SK-N-SH (cell line): ENCODE measurements at regions of chr1 and their contacts with region 1.

Region 1: GRCh38 chr1:15430787-15431570 is 7.3 kb upstream of the CTRC start:
- DNase-seq: peak; percentile 93
- H3K4me3 ChIP-seq: no peak overlapping the region; a peak in 1 of 4 replicates
- H3K27ac ChIP-seq: no peak overlapping the region
- H3K4me1 ChIP-seq: no peaks in the 10 kb centered on the region; a peak in 1 of 4 replicates
- H3K27me3 ChIP-seq: no peaks in the 10 kb centered on the region
- CTCF ChIP-seq: peak; percentile 98
- EP300 ChIP-seq: no peak
- RAD21 ChIP-seq: peak; percentile 93

Region 2: DNA sequence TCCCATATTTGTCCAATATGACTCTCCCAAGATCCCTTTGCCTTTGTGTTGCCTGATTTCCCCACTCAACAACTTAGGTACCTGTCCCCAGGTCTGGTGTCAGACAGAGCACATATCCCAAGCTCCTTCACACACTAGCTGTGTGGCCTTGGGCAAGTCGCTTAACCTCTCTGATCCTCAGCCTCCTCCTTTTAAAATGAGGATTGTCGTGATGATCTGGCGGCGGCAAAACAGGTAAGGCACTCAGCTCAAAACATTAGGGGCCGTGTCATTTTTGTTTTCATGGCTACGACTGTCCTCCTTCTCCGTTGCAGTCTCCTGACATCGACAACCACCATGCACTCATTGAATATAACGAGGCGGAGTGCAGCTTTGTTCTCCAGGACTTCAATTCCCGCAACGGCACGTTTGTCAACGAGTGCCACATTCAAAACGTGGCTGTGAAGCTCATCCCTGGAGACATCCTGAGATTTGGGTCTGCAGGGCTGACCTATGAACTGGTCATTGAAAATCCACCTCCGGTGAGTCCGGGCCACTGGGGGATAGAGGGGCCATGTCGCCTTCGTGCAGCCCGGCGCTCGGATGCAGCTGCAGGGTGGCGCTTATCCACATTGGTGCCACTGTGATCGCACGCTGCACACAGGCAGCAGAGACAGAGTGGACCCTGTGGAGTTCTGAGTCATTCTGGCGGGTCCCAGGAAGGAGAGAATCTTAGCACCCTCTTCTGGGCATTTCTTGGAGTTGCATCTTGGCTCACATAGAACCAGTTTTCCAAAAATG is 158.8 kb before region 1 on chr1:
- CTCF ChIA-PET with region 1: interaction called, 12 read pairs
- POLR2A ChIA-PET with region 1: no interaction called
- DNase-seq: peak; percentile 85
- H3K4me3 ChIP-seq: no peak overlapping the region
- H3K27ac ChIP-seq: no peak overlapping the region
- H3K4me1 ChIP-seq: peaks cover 0 to 5% of the 10 kb centered on the region in 2 experiments; a peak in 1 of 4 replicates
- H3K27me3 ChIP-seq: no peaks in the 10 kb centered on the region
- CTCF ChIP-seq: peak; percentile 82
- EP300 ChIP-seq: no peak
- RAD21 ChIP-seq: peak; percentile 96

Region 3: GRCh38 chr1:15311880-15312279 is 119.1 kb before region 1 on chr1:
- CTCF ChIA-PET with region 1: interaction called, 311 read pairs
- POLR2A ChIA-PET with region 1: no interaction called
- DNase-seq: no peak
- H3K4me3 ChIP-seq: no peak overlapping the region
- H3K27ac ChIP-seq: no peak overlapping the region
- H3K4me1 ChIP-seq: no peaks in the 10 kb centered on the region
- H3K27me3 ChIP-seq: no peaks in the 10 kb centered on the region
- CTCF ChIP-seq: no peak
- EP300 ChIP-seq: no peak
- RAD21 ChIP-seq: no peak

Region 4: GRCh38 chr1:15330028-15330427 is 101.0 kb before region 1 on chr1:
- CTCF ChIA-PET with region 1: interaction called, 311 read pairs
- POLR2A ChIA-PET with region 1: no interaction called
- DNase-seq: no peak
- H3K4me3 ChIP-seq: no peak overlapping the region
- H3K27ac ChIP-seq: no peak overlapping the region
- H3K4me1 ChIP-seq: peaks cover 4 to 37% of the 10 kb centered on the region in 2 experiments; a peak in 1 of 4 replicates
- H3K27me3 ChIP-seq: no peaks in the 10 kb centered on the region
- CTCF ChIP-seq: no peak
- EP300 ChIP-seq: no peak
- RAD21 ChIP-seq: no peak

Region 5: GRCh38 chr1:15418806-15419515 is 12.0 kb before region 1 on chr1:
- CTCF ChIA-PET with region 1: interaction called, 26 read pairs
- POLR2A ChIA-PET with region 1: interaction called, 5 read pairs
- DNase-seq: no peak
- H3K4me3 ChIP-seq: no peak overlapping the region
- H3K27ac ChIP-seq: no peak overlapping the region
- H3K4me1 ChIP-seq: peaks cover 15 to 28% of the 10 kb centered on the region in 2 experiments; a peak in 3 of 4 replicates
- H3K27me3 ChIP-seq: no peaks in the 10 kb centered on the region
- CTCF ChIP-seq: no peak
- EP300 ChIP-seq: no peak
- RAD21 ChIP-seq: no peak

Region 6: DNA sequence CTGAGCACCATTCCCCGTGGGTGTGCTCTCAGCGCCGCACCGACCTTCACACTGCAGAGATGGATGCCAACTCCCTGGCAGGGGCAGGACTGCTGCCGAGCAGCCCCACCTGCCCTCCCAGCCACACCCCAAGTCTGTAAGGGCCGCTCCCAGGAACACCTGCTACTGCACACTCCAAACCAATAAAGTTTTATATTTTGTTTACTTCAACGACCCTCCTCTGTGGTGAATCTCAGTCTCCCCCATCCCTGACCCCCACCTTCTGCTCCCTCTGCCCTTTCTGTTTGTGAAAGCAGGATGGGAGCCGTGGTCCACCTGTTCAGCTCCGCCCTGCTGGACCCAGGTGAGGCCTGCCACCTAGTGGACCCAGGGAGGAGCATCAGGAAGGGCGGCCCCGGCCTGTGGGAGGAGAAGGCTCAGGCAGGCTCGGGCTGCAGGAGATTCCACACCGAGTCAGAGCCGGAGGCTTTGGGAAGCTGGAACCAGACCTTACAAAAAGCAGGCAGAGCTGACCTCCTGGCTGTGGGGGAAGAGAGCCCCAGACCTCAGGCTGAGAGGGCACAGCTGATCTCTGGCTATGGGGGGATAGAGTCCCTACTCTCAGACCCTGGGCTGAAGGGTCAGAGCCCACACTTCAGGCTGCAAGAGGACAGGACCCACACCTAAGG is 310.3 kb after region 1 on chr1:
- CTCF ChIA-PET with region 1: no interaction called
- POLR2A ChIA-PET with region 1: no interaction called
- DNase-seq: peak; percentile 88
- H3K4me3 ChIP-seq: peak overlapping the region in 1 of 2 experiments; percentile 46; a peak in 1 of 4 replicates
- H3K27ac ChIP-seq: no peak overlapping the region
- H3K4me1 ChIP-seq: peaks cover 0 to 32% of the 10 kb centered on the region in 2 experiments; a peak in 1 of 4 replicates
- H3K27me3 ChIP-seq: no peaks in the 10 kb centered on the region
- CTCF ChIP-seq: peak; percentile 68
- EP300 ChIP-seq: no peak
- RAD21 ChIP-seq: peak; percentile 85